Aorta (tissue), 5 donors: ENCODE measurements at regions of chr12 and their contacts with region 1.

Region 1: DNA sequence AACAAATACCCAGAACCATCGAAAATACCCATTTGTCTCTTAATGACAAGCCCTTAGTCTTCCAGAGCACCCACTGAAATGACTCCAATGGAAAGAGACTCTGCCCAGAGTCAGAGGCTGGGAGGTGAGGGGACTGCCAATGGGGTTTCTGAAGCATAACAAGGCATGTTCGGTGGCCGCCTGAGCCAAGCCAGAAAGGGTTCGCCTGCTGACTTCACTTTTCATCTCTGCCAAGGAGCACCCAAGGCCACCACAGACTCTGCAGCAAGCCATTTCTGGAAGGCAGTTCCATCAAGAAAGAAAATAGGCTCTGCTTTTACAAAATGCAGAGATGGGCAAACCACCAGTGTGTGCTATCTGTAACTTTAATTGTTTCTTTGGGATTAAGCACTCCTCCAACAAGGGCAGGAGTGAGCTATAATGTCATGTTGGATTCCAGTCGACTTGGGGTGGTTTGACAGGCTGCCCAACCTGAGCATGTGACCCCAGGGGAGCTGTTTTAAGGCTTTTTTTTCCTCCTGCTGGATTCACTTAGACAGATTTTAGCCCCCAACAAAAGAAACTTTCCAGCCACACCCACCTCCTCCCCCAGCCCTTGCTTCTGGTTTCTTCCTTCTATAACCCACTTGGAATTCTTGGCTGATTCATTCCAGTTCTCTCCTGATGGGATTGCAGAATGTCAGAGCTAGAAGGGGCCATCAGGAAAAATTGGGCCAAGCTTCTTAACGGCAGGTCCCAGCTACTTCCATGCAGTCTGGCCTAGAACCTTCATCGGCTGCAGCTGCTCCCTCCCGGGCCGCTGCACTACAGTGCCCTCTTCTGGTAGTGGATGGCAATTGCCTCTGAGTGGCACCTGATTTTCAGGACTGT is 24.1 kb downstream of the CKAP4 start:
- DNase-seq: peak; percentile 72 to 85
- ATAC-seq: peak; percentile 93
- H3K4me3 ChIP-seq: no peak overlapping the region
- H3K27ac ChIP-seq: peak overlapping the region in 1 of 2 donors; percentile 37
- H3K4me1 ChIP-seq: peaks cover 0 to 4% of the 10 kb centered on the region in 2 donors
- H3K27me3 ChIP-seq: no peaks in the 10 kb centered on the region

Region 2: DNA sequence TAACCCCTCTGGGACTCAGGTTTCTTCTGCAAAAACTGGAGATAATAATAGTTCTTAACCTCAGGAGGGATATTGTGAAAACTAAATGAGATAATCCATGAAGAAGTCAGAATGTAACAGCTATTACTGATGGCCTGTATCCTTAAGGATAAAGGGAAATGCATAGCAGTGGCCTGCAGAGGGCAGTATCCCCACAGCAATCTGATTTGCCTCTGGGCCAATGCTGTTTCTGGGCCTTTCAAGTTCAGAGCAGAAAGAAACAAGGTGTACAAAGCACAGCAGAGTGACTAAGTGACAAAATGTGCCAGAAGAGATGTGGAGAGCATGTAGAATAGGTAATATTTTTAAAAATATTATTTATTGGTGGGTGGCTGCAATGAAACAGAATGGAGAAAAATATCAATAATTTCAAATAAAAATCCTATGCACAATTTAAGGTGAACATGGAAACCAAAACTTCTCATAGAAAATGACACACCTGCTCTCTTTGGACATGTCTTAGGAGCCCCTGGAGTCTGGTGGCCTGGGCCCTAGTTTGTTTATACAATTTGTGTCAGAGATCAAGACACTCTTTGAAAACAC is 803.0 kb before region 1 on chr12:
- intact Hi-C with region 1: loop called (anchors 2 kb)
- DNase-seq: peak; percentile 79 to 87
- ATAC-seq: peak; percentile 89
- H3K4me3 ChIP-seq: no peak overlapping the region
- H3K27ac ChIP-seq: no peak overlapping the region
- H3K4me1 ChIP-seq: peaks cover 0 to 2% of the 10 kb centered on the region in 2 donors
- H3K27me3 ChIP-seq: no peaks in the 10 kb centered on the region

Region 3: GRCh38 chr12:106149096-106149784 is 74.5 kb before region 1 on chr12:
- intact Hi-C with region 1: loop called in 1 of 2 experiments (anchors 5 kb)
- DNase-seq: no peak
- ATAC-seq: no peak
- H3K4me3 ChIP-seq: no peak overlapping the region
- H3K27ac ChIP-seq: peak overlapping the region in 1 of 2 donors; percentile 11
- H3K4me1 ChIP-seq: peaks cover 0 to 4% of the 10 kb centered on the region in 2 donors
- H3K27me3 ChIP-seq: no peaks in the 10 kb centered on the region

Region 4: GRCh38 chr12:106282457-106283097 is 58.9 kb after region 1 on chr12:
- intact Hi-C with region 1: loop called (anchors 1 to 2 kb)
- DNase-seq: peak in 1 of 2 donors; percentile 53
- ATAC-seq: peak; percentile 80
- H3K4me3 ChIP-seq: no peak overlapping the region
- H3K27ac ChIP-seq: no peak overlapping the region
- H3K4me1 ChIP-seq: no peaks in the 10 kb centered on the region
- H3K27me3 ChIP-seq: peaks cover 0 to 5% of the 10 kb centered on the region in 2 donors

Region 5: GRCh38 chr12:106342397-106343213 is 118.9 kb after region 1 on chr12:
- intact Hi-C with region 1: loop called in 1 of 2 experiments (anchors 5 kb)
- DNase-seq: peak; percentile 85 to 88
- ATAC-seq: peak; percentile 92
- H3K4me3 ChIP-seq: peak overlapping the region in 1 of 2 donors; percentile 26
- H3K27ac ChIP-seq: peak overlapping the region in 1 of 2 donors; percentile 67
- H3K4me1 ChIP-seq: peaks cover 0 to 4% of the 10 kb centered on the region in 2 donors
- H3K27me3 ChIP-seq: no peaks in the 10 kb centered on the region

Region 6: DNA sequence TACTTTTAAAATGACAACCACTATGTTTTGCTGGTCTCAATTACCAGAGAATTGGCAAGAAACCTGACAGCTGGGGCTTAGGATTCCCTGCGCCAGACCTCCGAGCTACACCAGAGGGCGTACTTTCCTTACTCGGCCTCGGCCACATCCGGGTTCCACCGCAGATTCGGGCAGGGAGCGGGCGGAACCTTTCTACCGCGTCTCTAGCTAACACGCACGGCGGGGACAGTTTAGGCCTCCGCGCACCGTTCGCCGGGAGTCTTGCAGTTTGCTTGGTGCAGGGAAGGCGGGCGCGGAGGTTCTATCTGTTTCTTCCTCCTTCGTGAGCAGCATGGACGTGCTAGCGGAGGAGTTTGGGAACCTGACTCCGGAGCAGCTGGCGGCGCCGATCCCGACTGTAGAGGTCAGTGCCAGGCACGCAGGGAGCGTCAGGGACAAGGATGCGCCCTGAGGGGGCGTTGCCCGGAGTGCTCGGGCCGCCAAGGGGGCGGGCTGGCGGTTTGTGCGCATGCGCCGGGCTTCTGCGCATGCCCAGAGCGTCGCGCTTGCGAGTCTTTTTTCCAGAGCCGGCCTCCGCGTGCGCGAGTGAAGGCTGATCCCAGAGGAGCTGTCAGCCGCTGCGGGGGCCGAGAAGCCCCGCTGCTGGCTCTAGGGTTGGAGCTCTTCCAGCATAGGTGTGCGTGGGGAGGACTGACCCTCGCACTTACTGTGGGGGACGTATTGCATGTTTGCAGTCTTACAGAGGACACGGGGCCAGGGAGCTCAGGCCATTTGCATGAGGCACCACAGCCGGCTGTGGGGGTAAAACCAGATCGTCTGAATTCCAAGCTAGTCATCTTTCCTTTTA is 134.1 kb after region 1 on chr12 and contains the start of gene POLR3B:
- intact Hi-C with region 1: loop called in 1 of 2 experiments (anchors 10 kb)
- DNase-seq: peak; percentile 97 to 98
- ATAC-seq: peak; percentile 99
- H3K4me3 ChIP-seq: peak within 1 kb of the TSS; percentile 53 to 93
- H3K27ac ChIP-seq: peak within 1 kb of the TSS; percentile 24 to 96
- H3K4me1 ChIP-seq: peaks cover 0 to 3% of the 10 kb centered on the region in 2 donors
- H3K27me3 ChIP-seq: no peaks in the 10 kb centered on the region
- total RNA-seq, gene POLR3B: 5.5 to 8.0 TPM